Lower leg skin (tissue), 4 donors: ENCODE measurements at regions of chr12 and their contacts with region 1.

Region 1: GRCh38 chr12:113048716-113049127 is 7.8 kb upstream of the DTX1 start:
- DNase-seq: peak in 1 of 2 donors; percentile 69
- H3K4me3 ChIP-seq: no peak overlapping the region
- CTCF ChIP-seq: peak in 1 of 3 donors; percentile 76
- POLR2A ChIP-seq: no peak

Region 2: DNA sequence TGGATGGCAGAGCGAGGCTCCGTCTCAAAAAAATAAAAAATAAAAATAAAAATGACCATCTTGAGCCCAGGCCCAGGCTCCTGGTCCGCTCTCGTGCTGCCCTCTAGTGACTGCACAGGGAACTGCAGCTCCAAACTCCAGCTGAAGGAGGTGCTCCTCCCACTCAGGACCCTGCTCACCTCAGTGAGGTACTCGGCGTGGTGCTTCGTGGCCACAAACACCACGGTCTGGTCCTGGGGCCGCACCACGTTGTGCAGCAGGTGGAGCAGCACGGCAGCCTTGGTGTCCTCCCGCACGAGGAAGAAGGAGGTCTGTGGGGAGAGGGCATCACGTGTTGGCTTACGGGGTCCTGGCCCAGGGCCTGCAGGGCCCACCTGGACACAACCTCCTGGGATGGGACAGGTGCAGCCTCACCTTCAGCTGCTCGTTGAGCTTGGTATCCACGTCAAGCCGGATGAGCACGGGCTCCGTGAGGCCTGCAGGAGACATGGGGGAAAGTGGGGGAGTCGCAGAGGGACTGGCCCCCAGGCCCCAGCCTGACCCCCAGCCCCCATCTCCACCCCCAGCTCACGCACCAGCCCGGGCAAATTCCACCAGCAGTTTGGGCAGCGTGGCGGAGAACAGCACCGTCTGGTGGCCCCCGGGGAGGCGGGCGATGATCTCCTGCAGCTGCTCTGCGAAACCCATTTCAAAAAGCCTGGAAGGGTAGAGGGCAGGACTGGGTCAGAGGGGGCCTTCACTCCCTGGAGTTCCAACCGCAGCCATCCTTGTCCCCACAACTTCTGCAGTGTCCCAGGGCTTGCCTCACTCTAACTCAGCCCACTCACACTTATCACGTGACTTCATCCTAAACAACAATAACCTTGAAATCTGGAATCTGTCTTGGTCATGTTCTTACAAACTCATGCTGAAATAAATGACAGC is 126.0 kb after region 1 on chr12:
- intact Hi-C with region 1: loop called (anchors 2 kb)
- DNase-seq: peak; percentile 56 to 94
- H3K4me3 ChIP-seq: no peak overlapping the region
- CTCF ChIP-seq: peak in 1 of 3 donors; percentile 98
- POLR2A ChIP-seq: no peak